Activated B cell treated with CpG ODN at 0.5 μM for 24 hours (primary cell): ENCODE measurements at regions of chr15 and their contacts with region 1.

Region 1: DNA sequence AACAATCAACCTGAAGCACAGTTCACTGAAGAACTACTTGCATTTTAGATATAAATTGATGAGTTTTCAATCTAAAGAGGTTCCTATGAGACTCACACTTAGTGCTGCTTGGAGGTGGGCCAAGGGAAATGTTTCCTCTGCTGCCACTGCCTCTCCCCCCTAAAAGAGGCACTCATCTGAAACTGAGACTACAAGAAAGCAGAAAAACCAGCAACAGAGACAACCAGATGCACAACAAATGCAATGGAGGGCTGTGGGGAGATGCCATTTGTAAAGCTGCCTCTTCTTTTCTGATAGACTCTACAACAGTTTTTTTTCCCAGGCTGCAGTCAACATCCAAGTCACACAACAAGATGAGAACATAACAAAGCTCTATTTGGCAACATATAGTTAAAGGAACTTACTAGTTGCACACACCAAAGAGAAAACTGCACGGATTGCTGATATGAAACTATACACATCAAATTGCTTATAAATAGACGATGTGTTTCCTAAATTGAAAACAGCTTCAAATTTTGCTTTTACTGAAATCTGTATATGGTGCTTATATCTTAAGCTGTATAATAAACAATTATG is 11.0 kb downstream of the TSPAN3 start:
- DNase-seq: no peak
- ATAC-seq: peak; percentile 50
- H3K4me3 Mint-ChIP-seq: peak overlapping the region; percentile 55
- H3K27ac Mint-ChIP-seq: peak overlapping the region; percentile 73
- H3K4me1 Mint-ChIP-seq: peaks cover 87% of the 10 kb centered on the region
- H3K27me3 Mint-ChIP-seq: no peaks in the 10 kb centered on the region
- CTCF ChIP-seq: no peak

Region 2: GRCh38 chr15:76311100-76311953 is 748.5 kb before region 1 on chr15 and contains the start of gene ETFA:
- CTCF ChIA-PET with region 1: no interaction called
- POLR2A ChIA-PET with region 1: no interaction called
- intact Hi-C with region 1: loop called (anchors 10 kb)
- DNase-seq: peak; percentile 90
- ATAC-seq: peak; percentile 97
- H3K4me3 Mint-ChIP-seq: peak within 1 kb of the TSS; percentile 89
- H3K27ac Mint-ChIP-seq: peak within 1 kb of the TSS; percentile 82
- H3K4me1 Mint-ChIP-seq: peaks cover 35% of the 10 kb centered on the region
- H3K27me3 Mint-ChIP-seq: no peaks in the 10 kb centered on the region
- CTCF ChIP-seq: no peak
- total RNA-seq, gene ETFA: 112 and 113 TPM in 2 replicates

Region 3: DNA sequence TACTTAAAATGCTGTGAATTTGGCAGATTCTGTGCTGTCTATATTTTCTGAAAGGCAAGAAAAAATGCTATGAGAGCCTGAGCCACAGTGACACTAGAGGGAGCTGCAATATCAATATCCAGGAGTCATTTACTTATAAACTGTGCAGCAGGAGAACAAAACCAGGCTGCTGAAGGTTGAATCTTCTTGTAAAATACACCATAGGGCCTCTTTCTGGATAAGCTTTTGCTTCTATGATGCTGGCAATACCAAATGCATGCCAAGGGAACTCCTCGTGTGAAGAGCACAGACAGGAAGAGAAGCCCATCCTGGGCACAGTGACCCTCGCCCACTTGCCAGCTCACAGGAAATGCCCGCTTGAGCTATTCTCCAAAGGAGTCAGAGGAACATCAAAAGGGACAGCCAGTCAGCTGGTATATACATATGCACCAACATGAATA is 59.0 kb after region 1 on chr15:
- CTCF ChIA-PET with region 1: no interaction called
- POLR2A ChIA-PET with region 1: no interaction called
- intact Hi-C with region 1: no loop called
- DNase-seq: no peak
- ATAC-seq: peak; percentile 62
- H3K4me3 Mint-ChIP-seq: no peak overlapping the region
- H3K27ac Mint-ChIP-seq: no peak overlapping the region
- H3K4me1 Mint-ChIP-seq: peaks cover 40% of the 10 kb centered on the region
- H3K27me3 Mint-ChIP-seq: no peaks in the 10 kb centered on the region
- CTCF ChIP-seq: no peak